ENCODE measurements at regions of chrX and their contacts with region 1.

Region 1: GRCh38 chrX:19840899-19841648 is 46.3 kb downstream of the SH3KBP1 start:
- DNase-seq: peak in 4 of 9 experiments; percentile 15 to 76 (median 52)
- ATAC-seq: no peak
- H3K4me3 ChIP-seq: peak overlapping the region in 1 of 2 experiments; percentile 16
- H3K4me3 Mint-ChIP-seq: peak overlapping the region; percentile 50
- H3K27ac ChIP-seq: peak overlapping the region in 1 of 2 experiments; percentile 54
- H3K27ac Mint-ChIP-seq: peak overlapping the region; percentile 89
- H3K4me1 ChIP-seq: peaks cover 23% of the 10 kb centered on the region
- H3K4me1 Mint-ChIP-seq: peaks cover 57% of the 10 kb centered on the region
- H3K27me3 ChIP-seq: no peaks in the 10 kb centered on the region
- H3K27me3 Mint-ChIP-seq: no peaks in the 10 kb centered on the region
- CTCF ChIP-seq: no peak

Region 2: DNA sequence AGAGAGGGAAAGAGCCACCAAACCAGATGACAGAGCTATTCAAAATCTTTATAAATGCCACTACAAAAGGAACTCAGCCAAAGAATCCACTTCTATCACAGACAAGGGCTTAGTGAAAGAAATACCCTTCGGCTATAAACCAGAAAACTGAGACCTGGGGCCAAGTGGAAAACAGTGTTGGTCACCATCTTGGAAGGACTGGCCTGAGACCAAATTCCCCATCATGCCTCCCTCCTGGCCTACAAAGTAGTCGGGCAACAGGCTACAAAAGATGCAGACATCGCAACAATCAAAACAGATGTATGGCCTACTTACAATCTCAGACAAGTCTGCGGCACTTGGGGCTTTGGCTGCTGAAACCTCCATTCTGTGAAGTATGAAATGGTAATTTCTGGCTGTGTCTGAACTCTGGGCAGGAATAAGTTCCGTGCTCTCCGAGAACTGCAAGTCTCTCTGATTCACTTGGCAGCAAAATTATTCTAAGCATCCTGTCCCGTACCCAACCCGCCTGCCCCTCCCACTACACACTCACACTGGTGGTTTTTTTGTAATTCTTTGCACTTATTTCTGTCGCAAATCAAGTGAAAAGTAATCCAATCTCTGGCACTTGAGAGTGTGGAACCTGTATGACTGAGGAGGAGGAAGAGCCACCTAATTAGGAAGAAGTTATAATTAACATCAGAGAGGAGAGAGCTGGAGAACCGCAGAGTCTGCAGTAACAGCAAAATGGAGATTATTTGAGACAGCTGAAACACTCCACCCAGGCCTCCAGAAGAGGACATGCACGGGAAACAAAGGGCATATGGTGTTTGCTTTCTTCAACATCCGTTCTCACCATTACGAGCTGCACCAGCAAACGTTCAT is 41.5 kb before region 1 on chrX:
- CTCF ChIA-PET with region 1: interaction called, 4 read pairs
- POLR2A ChIA-PET with region 1: interaction called, 6 read pairs
- intact Hi-C with region 1: loop called in 1 of 2 experiments (anchors 5 kb)
- DNase-seq: peak in 8 of 9 experiments; percentile 31 to 77 (median 60)
- ATAC-seq: peak; percentile 81
- H3K4me3 ChIP-seq: peak overlapping the region; percentile 45 to 60
- H3K4me3 Mint-ChIP-seq: peak overlapping the region; percentile 91
- H3K27ac ChIP-seq: peak overlapping the region; percentile 63 to 73
- H3K27ac Mint-ChIP-seq: peak overlapping the region; percentile 98
- H3K4me1 ChIP-seq: peaks cover 51% of the 10 kb centered on the region
- H3K4me1 Mint-ChIP-seq: peaks cover 68% of the 10 kb centered on the region
- H3K27me3 ChIP-seq: no peaks in the 10 kb centered on the region
- H3K27me3 Mint-ChIP-seq: no peaks in the 10 kb centered on the region
- CTCF ChIP-seq: no peak

Region 3: GRCh38 chrX:19805046-19805690 is 35.9 kb before region 1 on chrX:
- CTCF ChIA-PET with region 1: no interaction called
- POLR2A ChIA-PET with region 1: interaction called, 6 read pairs
- intact Hi-C with region 1: loop called in 1 of 2 experiments (anchors 5 kb)
- DNase-seq: peak in 3 of 9 experiments; percentile 43 to 70 (median 56)
- ATAC-seq: peak; percentile 80
- H3K4me3 ChIP-seq: peak overlapping the region; percentile 9 to 52
- H3K4me3 Mint-ChIP-seq: peak overlapping the region; percentile 68
- H3K27ac ChIP-seq: peak overlapping the region; percentile 51 to 65
- H3K27ac Mint-ChIP-seq: peak overlapping the region; percentile 88
- H3K4me1 ChIP-seq: peaks cover 41% of the 10 kb centered on the region
- H3K4me1 Mint-ChIP-seq: peaks cover 61% of the 10 kb centered on the region
- H3K27me3 ChIP-seq: no peaks in the 10 kb centered on the region
- H3K27me3 Mint-ChIP-seq: no peaks in the 10 kb centered on the region
- CTCF ChIP-seq: no peak

Region 4: GRCh38 chrX:19824603-19825002 is 16.5 kb before region 1 on chrX:
- CTCF ChIA-PET with region 1: interaction called, 4 read pairs
- POLR2A ChIA-PET with region 1: interaction called, 4 read pairs
- intact Hi-C with region 1: loop called in 1 of 2 experiments (anchors 2 kb)
- DNase-seq: peak in 6 of 9 experiments; percentile 44 to 73 (median 55)
- ATAC-seq: peak; percentile 76
- H3K4me3 ChIP-seq: no peak overlapping the region
- H3K4me3 Mint-ChIP-seq: peak overlapping the region; percentile 22
- H3K27ac ChIP-seq: no peak overlapping the region
- H3K27ac Mint-ChIP-seq: no peak overlapping the region
- H3K4me1 ChIP-seq: peaks cover 27% of the 10 kb centered on the region
- H3K4me1 Mint-ChIP-seq: peaks cover 42% of the 10 kb centered on the region
- H3K27me3 ChIP-seq: no peaks in the 10 kb centered on the region
- H3K27me3 Mint-ChIP-seq: no peaks in the 10 kb centered on the region
- CTCF ChIP-seq: no peak